Caco-2 (cell line): ENCODE measurements at regions of chr6 and their contacts with region 1.

Region 1: DNA sequence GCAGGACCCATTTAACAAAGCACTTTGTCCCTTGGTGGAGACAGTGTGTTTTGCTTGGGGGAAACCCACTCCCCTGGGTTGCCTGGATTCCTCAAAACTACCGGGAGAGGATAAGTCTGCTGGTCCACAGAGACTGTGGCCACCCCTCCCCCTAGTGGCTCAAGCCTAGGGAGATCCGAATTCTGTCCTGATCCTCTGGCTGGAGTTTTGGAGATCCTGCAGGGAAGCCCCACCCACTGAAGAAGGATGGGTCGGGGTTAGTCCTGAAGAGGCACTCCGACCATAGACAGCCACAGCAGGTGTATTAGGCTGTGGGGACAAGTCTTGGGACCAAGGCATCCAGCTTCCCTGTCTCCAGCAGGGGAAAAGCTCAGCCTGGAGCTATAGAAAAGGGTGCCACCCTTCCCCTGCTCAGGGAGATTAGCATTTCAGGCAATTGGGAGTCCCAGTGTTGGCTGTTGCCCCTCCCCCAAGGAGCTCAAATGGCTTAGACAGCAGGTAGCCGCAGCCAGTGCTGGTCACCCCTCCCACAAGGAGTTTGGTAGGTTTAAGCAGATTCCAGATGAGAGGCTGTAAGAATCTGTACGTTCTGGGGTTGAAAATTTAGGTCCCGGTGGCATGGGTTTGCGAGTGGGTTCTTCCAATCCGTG is 750.0 kb downstream of the TBC1D32 start:
- DNase-seq: no peak
- H3K4me3 ChIP-seq: no peak overlapping the region
- H3K4me3 Mint-ChIP-seq: no peak overlapping the region
- H3K27ac Mint-ChIP-seq: no peak overlapping the region
- H3K4me1 ChIP-seq: no peaks in the 10 kb centered on the region
- H3K4me1 Mint-ChIP-seq: no peaks in the 10 kb centered on the region
- H3K27me3 ChIP-seq: no peaks in the 10 kb centered on the region
- H3K27me3 Mint-ChIP-seq: no peaks in the 10 kb centered on the region
- CTCF ChIP-seq: no peak

Region 2: GRCh38 chr6:120608826-120609225 is 24.6 kb after region 1 on chr6:
- CTCF ChIA-PET with region 1: no interaction called
- POLR2A ChIA-PET with region 1: no interaction called
- intact Hi-C with region 1: no loop called
- DNase-seq: no peak
- H3K4me3 ChIP-seq: no peak overlapping the region
- H3K4me3 Mint-ChIP-seq: no peak overlapping the region
- H3K27ac Mint-ChIP-seq: no peak overlapping the region
- H3K4me1 ChIP-seq: no peaks in the 10 kb centered on the region
- H3K4me1 Mint-ChIP-seq: no peaks in the 10 kb centered on the region
- H3K27me3 ChIP-seq: no peaks in the 10 kb centered on the region
- H3K27me3 Mint-ChIP-seq: peaks cover 3% of the 10 kb centered on the region
- CTCF ChIP-seq: no peak

Region 3: DNA sequence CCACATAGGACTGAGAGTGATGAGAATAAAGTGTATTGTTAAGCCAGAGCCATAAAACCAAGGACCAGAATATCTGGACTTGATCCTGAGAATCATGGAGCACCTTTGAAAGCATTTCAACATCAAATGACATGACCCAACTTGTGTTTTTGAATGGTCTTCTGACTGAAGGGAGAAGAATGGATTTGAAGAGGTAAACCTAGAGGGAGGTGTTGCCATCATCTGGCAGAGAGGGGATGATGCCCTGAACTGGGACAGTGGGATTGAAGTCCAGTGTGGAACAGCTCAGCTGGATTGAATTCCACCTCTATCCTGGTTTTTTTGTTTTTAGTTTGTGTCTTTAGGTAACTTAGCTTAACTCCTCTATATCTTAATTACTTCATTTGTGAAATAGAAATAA is 180.1 kb after region 1 on chr6:
- CTCF ChIA-PET with region 1: no interaction called
- POLR2A ChIA-PET with region 1: no interaction called
- intact Hi-C with region 1: loop called (anchors 5 kb)
- DNase-seq: no peak
- H3K4me3 ChIP-seq: no peak overlapping the region
- H3K4me3 Mint-ChIP-seq: no peak overlapping the region
- H3K27ac Mint-ChIP-seq: no peak overlapping the region
- H3K4me1 ChIP-seq: no peaks in the 10 kb centered on the region
- H3K4me1 Mint-ChIP-seq: no peaks in the 10 kb centered on the region
- H3K27me3 ChIP-seq: no peaks in the 10 kb centered on the region
- H3K27me3 Mint-ChIP-seq: peaks cover 4% of the 10 kb centered on the region
- CTCF ChIP-seq: peak in 1 of 2 experiments; percentile 17

Region 4: DNA sequence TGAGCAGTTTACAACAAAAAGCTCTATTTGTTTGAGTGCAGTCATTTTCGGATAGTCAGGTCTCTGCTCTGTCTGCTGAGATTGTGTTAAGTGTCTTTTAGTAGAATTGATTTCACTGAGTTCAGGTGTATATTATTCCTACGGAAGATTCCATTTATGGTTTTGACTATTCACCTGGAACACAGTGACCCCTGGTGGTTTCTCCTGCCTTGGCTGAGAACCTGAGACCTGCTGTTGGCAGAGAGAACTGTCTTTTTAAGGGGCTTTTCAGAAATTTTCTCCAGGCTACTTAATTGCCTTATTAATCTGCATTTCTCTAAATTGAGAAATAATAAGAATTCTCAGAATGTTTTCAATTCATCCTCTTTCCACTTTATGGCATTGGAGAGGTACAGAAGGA is 242.0 kb after region 1 on chr6:
- CTCF ChIA-PET with region 1: interaction called, 3 read pairs
- POLR2A ChIA-PET with region 1: no interaction called
- intact Hi-C with region 1: loop called (anchors 1 kb)
- DNase-seq: peak; percentile 47 to 63
- H3K4me3 ChIP-seq: no peak overlapping the region
- H3K4me3 Mint-ChIP-seq: no peak overlapping the region
- H3K27ac Mint-ChIP-seq: no peak overlapping the region
- H3K4me1 ChIP-seq: no peaks in the 10 kb centered on the region
- H3K4me1 Mint-ChIP-seq: no peaks in the 10 kb centered on the region
- H3K27me3 ChIP-seq: no peaks in the 10 kb centered on the region
- H3K27me3 Mint-ChIP-seq: no peaks in the 10 kb centered on the region
- CTCF ChIP-seq: peak; percentile 69 to 76

Region 5: DNA sequence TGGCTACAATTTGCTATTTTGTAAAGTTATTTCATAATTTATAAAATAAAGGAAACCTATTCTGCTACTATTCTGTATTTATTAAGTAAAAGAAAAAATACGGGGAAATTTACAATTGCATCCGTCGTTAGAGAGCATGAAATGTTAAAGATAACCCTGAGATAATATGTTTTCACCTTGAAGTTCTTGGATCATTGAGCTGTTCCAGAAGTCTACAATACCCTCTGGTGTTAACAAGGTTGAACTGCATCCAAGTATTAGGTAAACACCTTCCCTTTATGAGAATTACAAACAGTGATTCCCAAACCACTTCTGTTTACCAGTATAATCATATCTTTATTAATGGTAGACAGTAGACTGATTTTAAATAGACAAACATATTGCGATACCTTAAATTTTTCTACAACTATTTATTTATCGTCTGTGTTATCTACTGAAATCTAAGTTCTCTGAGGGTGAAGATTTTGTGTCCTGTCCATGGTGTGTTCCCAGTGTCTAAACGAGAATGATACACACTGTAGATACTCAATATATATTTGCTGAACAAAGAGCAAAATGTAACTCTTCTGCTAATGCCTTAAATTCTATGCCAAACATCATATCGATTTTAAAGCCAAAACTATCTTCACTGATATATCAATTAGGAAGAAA is 721.8 kb after region 1 on chr6:
- CTCF ChIA-PET with region 1: interaction called, 3 read pairs
- POLR2A ChIA-PET with region 1: no interaction called
- intact Hi-C with region 1: loop called (anchors 10 kb)
- DNase-seq: peak in 1 of 2 experiments; percentile 31
- H3K4me3 ChIP-seq: no peak overlapping the region
- H3K4me3 Mint-ChIP-seq: no peak overlapping the region
- H3K27ac Mint-ChIP-seq: no peak overlapping the region
- H3K4me1 ChIP-seq: no peaks in the 10 kb centered on the region
- H3K4me1 Mint-ChIP-seq: no peaks in the 10 kb centered on the region
- H3K27me3 ChIP-seq: no peaks in the 10 kb centered on the region
- H3K27me3 Mint-ChIP-seq: no peaks in the 10 kb centered on the region
- CTCF ChIP-seq: peak; percentile 57 to 80